Gastrocnemius medialis (tissue), 4 donors: ENCODE measurements at regions of chr22 and their contacts with region 1.

Region 1: GRCh38 chr22:19730655-19731360 is 7.5 kb downstream of the GP1BB start:
- DNase-seq: peak; percentile 65 to 73
- ATAC-seq: peak; percentile 86 to 92
- H3K4me3 ChIP-seq: peak overlapping the region; percentile 44 to 53 (median 48)
- H3K27ac ChIP-seq: no peak overlapping the region
- H3K4me1 ChIP-seq: no peaks in the 10 kb centered on the region
- H3K27me3 ChIP-seq: no peaks in the 10 kb centered on the region
- CTCF ChIP-seq: peak; percentile 95 to 99 (median 98)
- POLR2A ChIP-seq: no peak

Region 2: DNA sequence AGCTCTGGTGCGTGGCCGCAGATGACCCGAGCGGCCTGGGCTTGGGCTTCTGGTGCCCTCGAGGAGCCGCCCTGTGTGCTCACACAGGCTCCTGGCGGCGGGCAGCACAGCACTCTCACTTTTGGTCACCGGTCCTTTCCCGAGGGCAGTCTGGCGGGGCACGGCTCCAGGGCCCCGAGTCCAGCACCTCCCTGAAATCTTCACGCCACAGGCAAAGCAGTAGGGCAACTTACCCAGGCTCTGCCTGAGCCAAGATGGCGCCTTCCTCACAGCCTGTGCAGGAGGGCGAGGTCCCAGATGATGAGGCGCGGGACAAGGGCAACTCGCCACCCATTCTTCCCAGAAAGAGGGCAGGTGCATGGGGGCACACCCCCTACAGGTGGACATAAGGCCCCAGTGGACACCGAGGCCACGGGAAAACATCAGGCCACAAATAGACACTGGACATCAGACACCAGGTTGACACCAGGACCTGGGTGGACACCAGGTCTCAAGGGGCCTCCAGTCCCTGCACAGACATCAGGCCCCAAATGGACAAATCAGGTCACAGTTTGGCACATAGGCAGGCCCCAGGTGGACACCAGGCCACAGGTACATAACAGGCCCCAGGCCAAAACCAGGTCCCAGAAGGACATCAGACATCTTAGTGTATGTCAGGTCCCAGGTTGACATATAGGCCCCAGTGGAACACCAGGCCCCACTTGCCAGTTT is 74.1 kb before region 1 on chr22:
- in situ Hi-C with region 1: no loop called
- intact Hi-C with region 1: no loop called
- DNase-seq: no peak
- ATAC-seq: no peak
- H3K4me3 ChIP-seq: no peak overlapping the region
- H3K27ac ChIP-seq: no peak overlapping the region
- H3K4me1 ChIP-seq: no peaks in the 10 kb centered on the region
- H3K27me3 ChIP-seq: no peaks in the 10 kb centered on the region
- CTCF ChIP-seq: no peak
- POLR2A ChIP-seq: no peak

Region 3: DNA sequence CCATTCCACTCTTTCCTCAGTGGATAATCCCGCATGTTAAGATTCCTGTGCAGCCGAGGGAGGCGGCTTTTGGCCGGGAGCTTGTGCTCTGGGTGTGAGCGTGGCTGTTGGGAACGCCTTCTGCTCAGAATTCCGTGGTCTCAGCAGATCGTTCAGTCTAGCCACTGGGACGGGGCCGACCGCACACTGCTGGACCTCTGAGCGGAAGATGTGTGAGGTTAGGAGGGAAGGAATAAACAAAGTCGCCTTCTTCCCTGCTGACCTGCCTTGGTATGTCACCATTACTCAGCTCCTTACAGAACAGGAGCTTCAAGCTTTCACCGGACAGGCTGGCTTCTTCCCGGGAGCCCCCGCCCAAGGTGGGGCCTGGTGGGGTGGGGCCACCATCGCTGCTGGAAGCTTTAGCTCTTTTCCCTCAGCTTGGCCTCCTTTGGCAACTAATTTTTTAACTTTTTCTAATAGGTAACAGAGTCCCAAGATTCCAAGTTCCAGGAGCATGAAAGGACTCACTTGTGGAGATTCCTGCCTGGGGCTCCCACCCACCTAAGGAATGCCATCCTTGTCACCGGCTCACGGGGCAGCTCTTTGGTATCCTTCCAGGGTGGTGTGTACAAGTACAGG is 39.0 kb before region 1 on chr22:
- in situ Hi-C with region 1: no loop called
- intact Hi-C with region 1: no loop called
- DNase-seq: no peak
- ATAC-seq: peak in 1 of 2 donors; percentile 41
- H3K4me3 ChIP-seq: peak overlapping the region in 1 of 4 donors; percentile 2
- H3K27ac ChIP-seq: no peak overlapping the region
- H3K4me1 ChIP-seq: no peaks in the 10 kb centered on the region
- H3K27me3 ChIP-seq: peaks cover 0 to 2% (median 0%) of the 10 kb centered on the region in 3 donors
- CTCF ChIP-seq: no peak
- POLR2A ChIP-seq: no peak

Region 4: GRCh38 chr22:19766511-19767426 is 36.0 kb after region 1 on chr22:
- in situ Hi-C with region 1: loop called in 1 of 4 experiments (anchors 5 kb)
- intact Hi-C with region 1: loop called (anchors 1 kb)
- DNase-seq: peak; percentile 23 to 65
- ATAC-seq: peak; percentile 79 to 81
- H3K4me3 ChIP-seq: peak overlapping the region; percentile 46 to 60 (median 48)
- H3K27ac ChIP-seq: no peak overlapping the region
- H3K4me1 ChIP-seq: peaks cover 0 to 4% of the 10 kb centered on the region in 2 donors
- H3K27me3 ChIP-seq: peaks cover 4 to 32% (median 22%) of the 10 kb centered on the region in 3 donors
- CTCF ChIP-seq: peak in 4 of 5 experiments; percentile 42 to 55 (median 48)
- POLR2A ChIP-seq: no peak

Region 5: DNA sequence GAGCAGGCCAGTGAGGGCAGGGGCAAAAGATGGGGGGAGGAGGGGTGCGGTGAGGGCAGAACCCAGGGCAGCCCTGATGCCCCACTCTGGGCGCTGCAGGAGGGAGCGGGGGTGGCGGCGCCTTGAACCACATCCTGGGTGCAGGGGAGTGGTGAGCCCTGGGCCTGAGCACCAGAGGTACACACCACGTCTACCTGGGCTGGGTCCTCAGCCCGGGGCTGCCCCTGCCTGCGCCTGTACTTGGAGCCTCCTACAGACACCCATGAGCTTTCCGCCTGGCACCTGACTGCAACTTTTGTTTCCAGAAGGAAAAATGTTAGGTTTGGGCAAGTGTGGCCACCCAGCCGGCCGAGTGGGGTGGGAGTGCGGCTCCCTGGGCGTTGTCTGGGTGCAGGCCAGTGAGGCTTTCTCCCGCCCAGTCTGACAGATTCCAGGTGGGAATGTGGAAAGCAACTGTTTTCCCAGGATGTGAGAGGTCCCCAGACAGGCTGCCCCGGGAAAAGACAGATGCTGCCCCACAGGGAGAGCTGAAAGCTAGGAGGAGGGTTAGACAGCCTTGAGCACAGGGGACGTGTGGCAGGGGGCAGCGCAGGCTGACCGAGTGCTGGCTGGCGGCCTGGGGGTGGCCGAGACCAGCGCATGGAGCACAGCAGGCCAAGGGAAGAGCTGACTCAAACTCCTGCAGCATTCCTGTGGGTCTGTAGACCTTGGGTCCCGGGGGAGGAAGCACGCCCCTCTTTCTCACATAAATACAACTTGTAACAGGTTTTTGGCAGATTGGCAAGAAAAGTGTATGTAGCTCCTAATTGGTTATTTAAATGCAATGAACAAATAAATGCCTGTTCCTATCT is 79.8 kb after region 1 on chr22:
- in situ Hi-C with region 1: no loop called
- intact Hi-C with region 1: no loop called
- DNase-seq: no peak
- ATAC-seq: no peak
- H3K4me3 ChIP-seq: no peak overlapping the region
- H3K27ac ChIP-seq: no peak overlapping the region
- H3K4me1 ChIP-seq: no peaks in the 10 kb centered on the region
- H3K27me3 ChIP-seq: no peaks in the 10 kb centered on the region
- CTCF ChIP-seq: no peak
- POLR2A ChIP-seq: no peak

Region 6: GRCh38 chr22:19909350-19910179 is 178.8 kb after region 1 on chr22:
- in situ Hi-C with region 1: loop called in 2 of 4 experiments (anchors 5 kb)
- intact Hi-C with region 1: loop called (anchors 1 kb)
- DNase-seq: peak; percentile 59 to 77
- ATAC-seq: peak; percentile 93 to 94
- H3K4me3 ChIP-seq: no peak overlapping the region
- H3K27ac ChIP-seq: no peak overlapping the region
- H3K4me1 ChIP-seq: no peaks in the 10 kb centered on the region
- H3K27me3 ChIP-seq: no peaks in the 10 kb centered on the region
- CTCF ChIP-seq: peak; percentile 77 to 93 (median 87)
- POLR2A ChIP-seq: no peak